Heart right ventricle (tissue), 16 donors: ENCODE measurements at regions of chr7 and their contacts with region 1.

Region 1: GRCh38 chr7:90552521-90552920 is 43.6 kb upstream of the CDK14 start:
- DNase-seq: no peak
- ATAC-seq: no peak
- H3K4me3 ChIP-seq: no peak overlapping the region
- H3K27ac ChIP-seq: no peak overlapping the region
- H3K4me1 ChIP-seq: no peaks in the 10 kb centered on the region
- H3K27me3 ChIP-seq: no peaks in the 10 kb centered on the region
- CTCF ChIP-seq: peak; percentile 10 to 68 (median 49)

Region 2: GRCh38 chr7:90595801-90596671 is 43.5 kb after region 1 on chr7 and contains the start of gene CDK14:
- intact Hi-C with region 1: loop called in 1 of 10 experiments (anchors 2 kb)
- DNase-seq: peak; percentile 81 to 85
- ATAC-seq: peak; percentile 62 to 84 (median 74)
- H3K4me3 ChIP-seq: peak within 1 kb of the TSS; percentile 63 to 90 (median 78)
- H3K27ac ChIP-seq: peak within 1 kb of the TSS; percentile 80 to 91 (median 84)
- H3K4me1 ChIP-seq: peaks cover 0 to 58% (median 25%) of the 10 kb centered on the region in 9 donors
- H3K27me3 ChIP-seq: peaks cover 0 to 5% (median 0%) of the 10 kb centered on the region in 7 donors
- CTCF ChIP-seq: peak; percentile 26 to 67 (median 50)
- total RNA-seq, gene CDK14: 12.7 to 36.5 (median 25.5) TPM

Region 3: DNA sequence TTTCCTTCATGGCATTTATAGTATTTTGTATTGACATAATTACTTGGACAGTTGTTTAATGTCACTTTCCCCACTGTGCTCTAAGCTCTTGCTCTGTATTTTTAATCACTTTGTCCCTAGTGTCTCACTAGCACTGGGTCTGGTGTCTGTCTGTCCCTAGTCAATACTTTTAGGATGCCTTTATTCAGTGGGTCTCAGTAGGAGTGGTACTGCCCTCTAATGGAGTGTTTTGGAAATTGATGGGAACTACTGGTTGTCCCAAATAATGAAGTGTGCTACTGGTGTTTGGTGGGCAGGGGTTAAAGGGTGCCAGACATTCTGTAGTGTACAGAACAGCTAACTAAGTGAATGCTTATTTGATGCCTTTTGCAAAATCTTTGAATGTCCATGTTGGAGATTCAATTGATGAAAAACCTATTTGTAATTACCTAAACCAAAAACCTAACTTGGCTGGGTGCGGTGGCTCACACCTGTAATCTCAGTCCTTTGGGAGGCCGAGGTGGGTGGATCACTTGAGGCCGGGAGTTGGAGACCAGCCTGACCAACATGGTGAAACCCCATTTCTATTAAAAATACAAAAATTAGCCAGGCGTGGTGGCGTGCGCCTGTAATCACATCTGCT is 76.9 kb after region 1 on chr7:
- intact Hi-C with region 1: loop called in 9 of 10 experiments (anchors 1 to 5 kb)
- DNase-seq: peak in 1 of 2 donors; percentile 38
- ATAC-seq: peak; percentile 70 to 88 (median 83)
- H3K4me3 ChIP-seq: no peak overlapping the region
- H3K27ac ChIP-seq: no peak overlapping the region
- H3K4me1 ChIP-seq: peaks cover 4 to 24% (median 20%) of the 10 kb centered on the region in 9 donors
- H3K27me3 ChIP-seq: no peaks in the 10 kb centered on the region
- CTCF ChIP-seq: peak; percentile 46 to 78 (median 69)